Heart left ventricle (tissue), 16 donors: ENCODE measurements at regions of chr15 and their contacts with region 1.

Region 1: GRCh38 chr15:81155375-81156218 is 21.5 kb downstream of the CFAP161 start:
- DNase-seq: no peak
- ATAC-seq: peak in 2 of 4 donors; percentile 7 to 48
- H3K4me3 ChIP-seq: no peak overlapping the region
- H3K27ac ChIP-seq: no peak overlapping the region
- H3K4me1 ChIP-seq: peaks cover 0 to 24% (median 15%) of the 10 kb centered on the region in 12 donors
- H3K27me3 ChIP-seq: no peaks in the 10 kb centered on the region
- CTCF ChIP-seq: peak; percentile 29 to 78 (median 66)
- POLR2A ChIP-seq: no peak

Region 2: DNA sequence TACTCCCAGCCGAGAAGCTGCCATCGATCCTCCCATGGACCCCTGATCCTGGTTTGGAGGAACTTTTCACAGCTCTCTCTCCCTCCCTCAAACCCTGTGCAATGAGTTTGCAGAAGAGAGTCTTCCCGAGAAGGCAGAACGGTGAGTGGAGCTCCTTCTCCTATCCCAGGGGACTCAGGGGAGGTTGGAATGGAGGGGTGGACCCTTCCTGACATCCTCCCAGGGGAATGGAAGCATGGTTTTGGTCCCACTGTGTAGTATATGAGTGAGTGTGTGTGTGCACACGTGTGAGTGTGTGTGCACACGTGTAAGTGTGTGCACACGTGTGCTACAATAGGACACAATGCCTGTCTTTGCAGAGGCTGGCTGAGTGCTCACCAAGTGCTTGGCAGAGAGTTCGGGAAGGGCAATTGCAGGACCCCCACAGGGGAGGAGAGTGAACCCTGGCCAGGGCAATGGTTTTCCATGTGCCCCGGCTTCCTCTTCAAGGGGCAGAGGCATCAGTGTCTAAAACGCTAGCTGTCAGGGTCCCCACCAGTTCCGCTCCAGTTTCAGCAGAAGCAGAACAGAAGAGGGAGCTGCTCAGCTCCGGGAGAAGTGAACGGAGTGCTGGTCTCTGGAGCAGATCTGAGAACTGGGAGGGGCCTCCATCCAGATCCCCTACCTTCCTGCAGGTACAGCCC is 27.3 kb after region 1 on chr15:
- intact Hi-C with region 1: no loop called
- DNase-seq: peak in 2 of 5 donors; percentile 32 to 40
- ATAC-seq: peak; percentile 55 to 78 (median 66)
- H3K4me3 ChIP-seq: peak overlapping the region in 10 of 12 donors; percentile 23 to 61 (median 40)
- H3K27ac ChIP-seq: peak overlapping the region in 11 of 12 donors; percentile 9 to 78 (median 58)
- H3K4me1 ChIP-seq: peaks cover 0 to 18% (median 0%) of the 10 kb centered on the region in 12 donors
- H3K27me3 ChIP-seq: peaks cover 0 to 12% (median 0%) of the 10 kb centered on the region in 9 donors
- CTCF ChIP-seq: peak in 4 of 12 donors; percentile 18 to 46 (median 28)
- POLR2A ChIP-seq: no peak

Region 3: DNA sequence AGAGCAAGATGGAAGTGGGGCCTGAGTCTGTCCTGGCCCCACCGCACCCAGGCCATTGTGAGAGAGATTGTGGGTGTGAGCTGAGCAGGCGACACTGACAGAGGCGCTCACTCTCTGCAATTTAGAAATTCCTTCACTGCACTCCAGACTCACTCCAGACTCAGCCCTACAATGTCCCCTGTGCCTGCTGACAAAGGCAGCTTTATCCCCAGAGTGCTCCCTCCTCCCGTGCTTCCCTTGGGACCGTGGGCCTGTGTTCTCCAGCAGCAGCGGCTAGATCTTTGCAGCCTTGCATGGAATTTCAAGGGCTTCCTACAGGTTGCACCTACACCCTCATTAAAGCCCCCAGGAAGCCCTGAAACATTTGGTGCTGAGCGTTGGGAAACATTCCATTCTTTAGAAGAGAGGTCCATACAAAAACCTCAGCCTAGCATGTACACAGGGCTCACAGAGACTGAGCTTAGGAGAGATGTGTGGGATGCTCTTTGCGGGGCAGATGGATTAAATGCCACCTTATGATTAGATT is 39.8 kb after region 1 on chr15:
- intact Hi-C with region 1: loop called in 1 of 10 experiments (anchors 5 kb)
- DNase-seq: no peak
- ATAC-seq: peak in 1 of 4 donors; percentile 25
- H3K4me3 ChIP-seq: no peak overlapping the region
- H3K27ac ChIP-seq: no peak overlapping the region
- H3K4me1 ChIP-seq: peaks cover 0 to 11% (median 0%) of the 10 kb centered on the region in 12 donors
- H3K27me3 ChIP-seq: peaks cover 0 to 5% (median 0%) of the 10 kb centered on the region in 9 donors
- CTCF ChIP-seq: no peak
- POLR2A ChIP-seq: no peak

Region 4: DNA sequence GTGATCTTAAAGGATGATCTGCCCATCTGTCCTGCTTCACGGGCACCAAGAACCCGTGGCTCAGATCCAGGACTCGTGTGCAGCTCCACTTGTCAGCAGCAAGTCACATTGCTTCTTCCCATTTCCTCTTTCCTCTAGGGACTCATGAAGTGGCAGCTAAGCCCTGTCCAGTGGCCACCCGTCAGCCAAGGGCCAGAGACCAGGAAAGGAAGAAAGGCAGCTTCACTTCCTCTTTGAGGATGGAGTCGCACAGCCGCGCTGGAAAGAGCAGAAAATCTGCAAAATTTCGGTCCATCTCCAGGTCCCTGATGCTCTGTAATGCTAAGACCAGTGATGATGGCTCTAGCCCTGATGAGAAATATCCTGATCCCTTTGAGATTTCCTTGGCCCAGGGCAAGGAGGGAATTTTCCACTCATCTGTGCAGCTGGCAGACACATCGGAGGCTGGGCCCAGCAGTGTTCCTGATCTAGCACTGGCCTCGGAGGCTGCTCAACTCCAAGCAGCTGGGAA is 69.6 kb after region 1 on chr15:
- intact Hi-C with region 1: loop called in 2 of 10 experiments (anchors 5 to 10 kb)
- DNase-seq: peak; percentile 55 to 80 (median 65)
- ATAC-seq: peak; percentile 66 to 78 (median 76)
- H3K4me3 ChIP-seq: no peak overlapping the region
- H3K27ac ChIP-seq: peak overlapping the region; percentile 23 to 85 (median 58)
- H3K4me1 ChIP-seq: peaks cover 0 to 49% (median 16%) of the 10 kb centered on the region in 12 donors
- H3K27me3 ChIP-seq: no peaks in the 10 kb centered on the region
- CTCF ChIP-seq: no peak
- POLR2A ChIP-seq: no peak

Region 5: GRCh38 chr15:81256916-81257315 is 101.3 kb after region 1 on chr15:
- intact Hi-C with region 1: loop called in 4 of 10 experiments (anchors 2 to 5 kb)
- DNase-seq: no peak
- ATAC-seq: peak in 2 of 4 donors; percentile 48 to 56
- H3K4me3 ChIP-seq: no peak overlapping the region
- H3K27ac ChIP-seq: no peak overlapping the region
- H3K4me1 ChIP-seq: peaks cover 0 to 12% (median 0%) of the 10 kb centered on the region in 12 donors
- H3K27me3 ChIP-seq: no peaks in the 10 kb centered on the region
- CTCF ChIP-seq: peak in 11 of 12 donors; percentile 7 to 66 (median 49)
- POLR2A ChIP-seq: no peak